Posterior cingulate gyrus (tissue), 11 donors: ENCODE measurements at regions of chr10 and their contacts with region 1.

Region 1: DNA sequence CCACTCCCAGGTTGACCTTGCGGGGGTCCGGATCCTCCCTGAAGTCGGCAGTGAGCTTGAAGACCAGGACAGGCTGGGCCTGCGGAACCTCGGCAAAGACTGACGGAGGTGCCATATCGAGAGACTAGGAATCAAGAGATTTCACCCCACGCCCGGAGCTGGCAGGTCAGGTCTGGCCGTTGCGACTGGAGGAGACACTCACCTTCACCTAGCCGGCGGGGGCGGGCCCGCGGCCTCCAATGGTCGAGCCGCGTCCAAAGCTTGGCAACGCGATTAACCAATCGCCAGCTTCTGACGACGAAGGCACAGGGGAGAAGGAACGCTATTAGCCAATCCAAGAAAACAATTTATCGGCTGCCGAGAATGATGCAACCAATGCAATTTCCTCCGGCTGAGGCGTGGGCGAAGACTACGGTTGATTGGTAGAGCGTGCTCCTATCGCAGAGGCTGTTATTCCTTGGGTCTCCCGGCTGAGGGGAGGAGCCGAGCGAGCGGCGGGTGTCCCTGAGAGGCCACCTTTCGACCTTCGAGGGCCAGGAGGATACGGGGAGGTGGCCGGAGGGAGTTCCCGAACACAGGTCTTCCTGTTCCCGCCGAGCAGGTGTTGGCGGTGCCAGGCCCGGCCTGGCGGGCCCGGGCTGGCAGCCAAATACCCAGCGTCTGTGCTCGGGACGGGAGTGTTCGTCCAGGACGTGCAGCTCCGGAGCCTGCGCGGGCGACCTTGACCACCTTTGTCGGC is at the start of gene GOT1:
- DNase-seq: peak; percentile 91 to 99 (median 96)

Region 2: GRCh38 chr10:99316374-99316773 is 114.2 kb before region 1 on chr10:
- intact Hi-C with region 1: no loop called
- DNase-seq: no peak

Region 3: DNA sequence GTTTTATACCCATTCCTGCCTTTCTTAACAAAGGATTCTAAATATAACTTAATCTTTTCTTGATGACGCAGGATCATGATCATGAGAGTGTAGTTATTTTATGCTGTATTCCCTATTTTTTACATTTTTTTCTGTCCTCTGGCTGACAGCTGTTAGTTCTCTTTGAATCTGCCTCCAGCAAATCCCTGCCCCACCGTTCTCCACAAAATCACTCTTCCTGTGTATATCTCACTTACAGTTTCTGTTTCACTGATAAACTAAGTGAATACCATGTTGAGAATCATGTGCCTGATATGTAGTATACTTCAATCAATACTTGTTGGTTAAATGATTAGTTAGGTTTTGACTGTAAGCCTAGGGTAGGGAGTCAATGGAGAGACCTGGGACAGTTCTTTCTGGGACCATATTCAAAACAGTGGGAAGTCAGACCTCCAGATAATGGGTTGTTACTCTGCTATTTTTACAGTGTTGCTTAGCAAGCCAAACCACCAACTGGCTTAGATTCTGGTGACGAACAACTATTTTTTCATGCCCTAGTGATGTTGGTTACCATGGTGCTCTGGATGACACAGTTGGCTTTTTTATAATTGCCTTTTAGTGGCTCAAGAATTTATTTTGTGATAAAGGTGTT is 88.6 kb before region 1 on chr10:
- intact Hi-C with region 1: no loop called
- DNase-seq: no peak

Region 4: DNA sequence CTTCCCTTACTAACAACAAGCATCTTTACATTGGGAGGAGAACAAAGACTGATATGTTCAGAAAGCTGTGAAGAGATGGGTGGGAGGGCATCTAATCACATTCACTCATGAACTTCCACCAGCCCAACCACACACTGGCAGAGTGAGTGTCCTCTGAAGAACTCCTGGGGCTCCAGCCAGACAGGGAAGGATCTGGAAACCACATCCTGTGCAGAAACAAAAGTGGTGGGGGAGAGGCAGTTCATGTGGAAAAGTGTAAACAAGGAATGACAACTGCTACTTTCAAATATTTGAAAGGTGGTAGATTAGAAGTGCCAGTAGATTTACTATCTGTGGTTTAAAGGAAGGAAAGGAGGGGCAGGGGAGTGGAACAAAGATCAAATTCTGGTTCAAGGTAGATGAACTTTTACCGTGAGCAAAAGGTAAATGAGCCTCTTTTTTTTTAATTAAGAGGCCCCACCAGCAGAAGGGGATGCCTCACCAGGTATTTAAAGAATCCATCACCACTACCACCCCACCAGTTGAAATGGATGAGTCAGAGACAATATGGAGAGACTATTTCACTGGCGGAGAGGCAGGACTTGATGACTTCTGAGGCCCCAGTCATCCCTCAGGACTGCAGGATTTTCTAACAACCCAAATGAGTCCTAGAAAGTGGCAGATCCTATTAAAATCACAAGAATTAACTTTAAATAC is 34.7 kb before region 1 on chr10:
- intact Hi-C with region 1: loop called (anchors 2 kb)
- DNase-seq: peak in 2 of 10 donors; percentile 13 to 27

Region 5: GRCh38 chr10:99732033-99732912 is 301.7 kb after region 1 on chr10 and contains the starts of genes COX15 and CUTC:
- intact Hi-C with region 1: loop called (anchors 5 kb)
- DNase-seq: peak; percentile 93 to 99 (median 97)

Region 6: GRCh38 chr10:99758211-99758891 is 327.7 kb after region 1 on chr10:
- intact Hi-C with region 1: no loop called
- DNase-seq: no peak